ENCODE measurements at regions of chr2 and their contacts with region 1.

Region 1: DNA sequence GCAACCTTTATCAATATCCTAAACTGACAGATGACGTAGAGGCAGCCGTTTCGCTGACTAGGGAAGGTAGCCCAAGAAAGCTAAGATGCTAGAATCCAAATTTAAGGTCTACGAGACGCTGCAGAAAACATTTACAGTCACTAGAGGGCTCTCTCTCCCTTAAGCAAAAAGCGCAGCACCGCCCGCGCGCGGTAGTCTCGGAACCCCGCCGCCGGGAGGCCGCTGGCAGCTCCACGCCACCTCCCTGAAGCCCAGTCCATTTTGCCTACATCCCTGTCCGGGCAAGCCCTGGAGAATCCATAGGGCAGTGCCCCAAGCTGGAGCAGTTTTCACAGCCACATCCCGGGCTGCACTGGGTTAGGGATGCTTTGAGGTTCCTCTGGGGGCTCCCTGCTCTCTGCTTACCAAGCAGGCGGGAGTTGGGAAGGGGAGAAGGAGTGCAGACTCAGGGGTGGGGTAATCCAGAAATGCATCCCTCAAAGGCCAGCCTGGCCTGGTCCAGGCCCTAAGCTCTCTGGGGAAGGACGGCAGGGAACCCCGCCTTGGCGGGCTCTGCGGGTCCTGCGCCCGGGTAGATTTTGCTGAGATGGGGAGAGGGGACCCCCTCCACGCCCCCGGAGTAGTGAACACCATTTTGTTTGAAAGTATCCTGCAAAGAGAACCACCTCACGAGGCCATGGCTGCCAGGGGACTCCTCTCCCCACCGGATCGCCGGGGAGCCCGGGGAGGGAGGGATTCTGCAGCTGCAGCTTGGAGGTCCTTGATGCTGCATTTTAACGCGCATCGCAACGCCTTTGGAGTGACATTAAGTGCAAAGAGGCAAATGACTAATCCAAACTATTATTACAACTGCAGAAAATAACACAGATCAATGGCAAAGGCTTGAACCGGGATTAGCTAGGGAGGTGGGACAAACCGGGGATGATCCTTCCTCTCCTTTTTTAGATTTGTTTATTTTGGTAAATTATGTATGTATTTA is 1.3 kb upstream of the DPYSL5 start:
- DNase-seq: peak; percentile 76
- ATAC-seq: peak; percentile 33
- H3K4me3 Mint-ChIP-seq: peak overlapping the region; percentile 79
- H3K27ac Mint-ChIP-seq: no peak overlapping the region
- H3K4me1 Mint-ChIP-seq: peaks cover 9% of the 10 kb centered on the region
- H3K27me3 Mint-ChIP-seq: peaks cover 68% of the 10 kb centered on the region
- CTCF ChIP-seq: peak; percentile 53

Region 2: GRCh38 chr2:26877276-26877675 is 30.7 kb after region 1 on chr2:
- CTCF ChIA-PET with region 1: no interaction called
- POLR2A ChIA-PET with region 1: no interaction called
- DNase-seq: no peak
- ATAC-seq: no peak
- H3K4me3 Mint-ChIP-seq: no peak overlapping the region
- H3K27ac Mint-ChIP-seq: no peak overlapping the region
- H3K4me1 Mint-ChIP-seq: no peaks in the 10 kb centered on the region
- H3K27me3 Mint-ChIP-seq: peaks cover 33% of the 10 kb centered on the region
- CTCF ChIP-seq: no peak

Region 3: GRCh38 chr2:26901326-26902183 is 54.9 kb after region 1 on chr2:
- CTCF ChIA-PET with region 1: interaction called, 18 read pairs
- POLR2A ChIA-PET with region 1: no interaction called
- DNase-seq: peak; percentile 69
- ATAC-seq: peak; percentile 77
- H3K4me3 Mint-ChIP-seq: peak overlapping the region; percentile 49
- H3K27ac Mint-ChIP-seq: no peak overlapping the region; the same call in 1 of the 2 replicates
- H3K4me1 Mint-ChIP-seq: peaks cover 25% of the 10 kb centered on the region
- H3K27me3 Mint-ChIP-seq: peaks cover 9% of the 10 kb centered on the region
- CTCF ChIP-seq: no peak

Region 4: DNA sequence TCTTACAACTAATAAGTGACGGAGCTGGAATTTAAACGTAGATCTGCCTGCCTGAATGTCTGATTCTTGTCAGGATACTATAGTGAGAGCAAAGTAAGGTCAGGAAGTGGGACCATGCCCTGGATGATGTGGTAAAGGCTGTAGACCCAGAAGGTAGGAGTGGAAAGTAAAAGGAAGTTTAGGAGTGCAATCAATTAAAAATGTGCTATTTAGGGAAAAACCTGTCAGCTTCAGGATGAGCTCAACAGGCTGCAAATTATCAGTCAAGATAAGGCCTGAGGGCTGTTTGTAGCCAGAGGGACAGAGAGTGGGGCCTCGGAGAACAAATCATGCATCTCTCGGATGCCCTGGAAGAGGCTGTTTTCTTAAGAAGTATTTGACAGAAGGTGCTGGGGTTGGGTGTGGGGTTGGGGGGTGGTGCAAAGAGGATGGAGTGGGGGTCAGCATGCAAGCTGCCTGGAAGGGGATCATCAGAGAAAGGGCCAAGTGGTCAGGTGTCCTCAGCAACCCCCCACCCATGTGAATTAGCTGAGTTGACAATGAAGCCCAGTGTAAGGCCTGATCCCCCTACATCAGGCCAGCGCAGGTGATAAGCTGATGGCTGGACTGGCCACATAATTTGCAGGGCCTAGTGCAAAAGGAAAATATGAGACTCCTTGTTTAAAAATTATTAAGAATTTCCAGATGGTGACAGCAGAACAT is 70.7 kb after region 1 on chr2:
- CTCF ChIA-PET with region 1: interaction called, 137 read pairs
- POLR2A ChIA-PET with region 1: no interaction called
- DNase-seq: no peak
- ATAC-seq: no peak
- H3K4me3 Mint-ChIP-seq: no peak overlapping the region
- H3K27ac Mint-ChIP-seq: no peak overlapping the region
- H3K4me1 Mint-ChIP-seq: peaks cover 19% of the 10 kb centered on the region
- H3K27me3 Mint-ChIP-seq: no peaks in the 10 kb centered on the region
- CTCF ChIP-seq: no peak

Region 5: GRCh38 chr2:26933431-26934334 is 87.1 kb after region 1 on chr2:
- CTCF ChIA-PET with region 1: interaction called, 315 read pairs
- POLR2A ChIA-PET with region 1: no interaction called
- DNase-seq: no peak
- ATAC-seq: no peak
- H3K4me3 Mint-ChIP-seq: no peak overlapping the region
- H3K27ac Mint-ChIP-seq: no peak overlapping the region
- H3K4me1 Mint-ChIP-seq: no peaks in the 10 kb centered on the region
- H3K27me3 Mint-ChIP-seq: no peaks in the 10 kb centered on the region
- CTCF ChIP-seq: no peak

Region 6: GRCh38 chr2:26952374-26952773 is 105.8 kb after region 1 on chr2:
- CTCF ChIA-PET with region 1: interaction called, 16 read pairs
- POLR2A ChIA-PET with region 1: no interaction called
- DNase-seq: no peak
- ATAC-seq: peak; percentile 39; the same call in 1 of the 2 replicates
- H3K4me3 Mint-ChIP-seq: no peak overlapping the region
- H3K27ac Mint-ChIP-seq: no peak overlapping the region
- H3K4me1 Mint-ChIP-seq: 0 out of 2 replicates have a peak, but pooled peaks cover 2% of the 10 kb centered on the region
- H3K27me3 Mint-ChIP-seq: no peaks in the 10 kb centered on the region
- CTCF ChIP-seq: no peak

Region 7: DNA sequence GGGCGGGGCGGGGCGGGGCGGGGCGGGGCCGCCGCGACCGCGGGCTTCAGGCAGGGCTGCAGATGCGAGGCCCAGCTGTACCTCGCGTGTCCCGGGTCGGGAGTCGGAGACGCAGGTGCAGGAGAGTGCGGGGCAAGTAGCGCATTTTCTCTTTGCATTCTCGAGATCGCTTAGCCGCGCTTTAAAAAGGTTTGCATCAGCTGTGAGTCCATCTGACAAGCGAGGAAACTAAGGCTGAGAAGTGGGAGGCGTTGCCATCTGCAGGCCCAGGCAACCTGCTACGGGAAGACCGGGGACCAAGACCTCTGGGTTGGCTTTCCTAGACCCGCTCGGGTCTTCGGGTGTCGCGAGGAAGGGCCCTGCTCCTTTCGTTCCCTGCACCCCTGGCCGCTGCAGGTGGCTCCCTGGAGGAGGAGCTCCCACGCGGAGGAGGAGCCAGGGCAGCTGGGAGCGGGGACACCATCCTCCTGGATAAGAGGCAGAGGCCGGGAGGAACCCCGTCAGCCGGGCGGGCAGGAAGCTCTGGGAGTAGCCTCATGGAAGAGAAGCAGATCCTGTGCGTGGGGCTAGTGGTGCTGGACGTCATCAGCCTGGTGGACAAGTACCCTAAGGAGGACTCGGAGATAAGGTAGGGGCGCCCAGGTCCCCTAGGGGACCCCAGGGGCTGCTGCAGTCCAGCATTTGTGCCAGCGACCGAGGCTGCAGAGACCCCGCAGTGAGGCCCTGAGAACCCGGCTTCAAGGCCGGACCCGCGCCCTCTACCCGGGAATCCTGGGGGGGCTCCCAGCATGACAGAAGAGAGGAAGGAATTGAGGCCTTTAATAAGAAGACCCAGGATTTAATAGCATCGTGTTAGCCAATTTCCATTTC is 240.3 kb after region 1 on chr2 and contains the start of gene KHK:
- CTCF ChIA-PET with region 1: no interaction called
- POLR2A ChIA-PET with region 1: no interaction called
- DNase-seq: peak; percentile 67
- ATAC-seq: peak; percentile 37
- H3K4me3 Mint-ChIP-seq: peak within 1 kb of the TSS; percentile 84
- H3K27ac Mint-ChIP-seq: no peak within 1 kb of the TSS
- H3K4me1 Mint-ChIP-seq: peaks cover 16% of the 10 kb centered on the region
- H3K27me3 Mint-ChIP-seq: peaks cover 23% of the 10 kb centered on the region
- CTCF ChIP-seq: peak; percentile 36; the same call in 1 of the 2 replicates
- total RNA-seq, gene KHK: 15.5 to 17.4 TPM (median 17.4 TPM) in 3 replicates